ENCODE measurements at regions of chr15 and their contacts with region 1.

Region 1: GRCh38 chr15:63277038-63277892 is at the start of gene APH1B:
- DNase-seq: peak; percentile 51 to 87 (median 76)
- ATAC-seq: peak; percentile 88
- H3K4me3 ChIP-seq: peak within 1 kb of the TSS; percentile 79 to 80
- H3K4me3 Mint-ChIP-seq: peak within 1 kb of the TSS; percentile 89
- H3K27ac ChIP-seq: peak within 1 kb of the TSS; percentile 62 to 74
- H3K27ac Mint-ChIP-seq: peak within 1 kb of the TSS; percentile 91
- H3K4me1 ChIP-seq: peaks cover 19% of the 10 kb centered on the region
- H3K4me1 Mint-ChIP-seq: peaks cover 36% of the 10 kb centered on the region
- H3K27me3 ChIP-seq: no peaks in the 10 kb centered on the region
- H3K27me3 Mint-ChIP-seq: no peaks in the 10 kb centered on the region
- CTCF ChIP-seq: no peak
- total RNA-seq, gene APH1B: 10.8 to 13.6 TPM

Region 2: DNA sequence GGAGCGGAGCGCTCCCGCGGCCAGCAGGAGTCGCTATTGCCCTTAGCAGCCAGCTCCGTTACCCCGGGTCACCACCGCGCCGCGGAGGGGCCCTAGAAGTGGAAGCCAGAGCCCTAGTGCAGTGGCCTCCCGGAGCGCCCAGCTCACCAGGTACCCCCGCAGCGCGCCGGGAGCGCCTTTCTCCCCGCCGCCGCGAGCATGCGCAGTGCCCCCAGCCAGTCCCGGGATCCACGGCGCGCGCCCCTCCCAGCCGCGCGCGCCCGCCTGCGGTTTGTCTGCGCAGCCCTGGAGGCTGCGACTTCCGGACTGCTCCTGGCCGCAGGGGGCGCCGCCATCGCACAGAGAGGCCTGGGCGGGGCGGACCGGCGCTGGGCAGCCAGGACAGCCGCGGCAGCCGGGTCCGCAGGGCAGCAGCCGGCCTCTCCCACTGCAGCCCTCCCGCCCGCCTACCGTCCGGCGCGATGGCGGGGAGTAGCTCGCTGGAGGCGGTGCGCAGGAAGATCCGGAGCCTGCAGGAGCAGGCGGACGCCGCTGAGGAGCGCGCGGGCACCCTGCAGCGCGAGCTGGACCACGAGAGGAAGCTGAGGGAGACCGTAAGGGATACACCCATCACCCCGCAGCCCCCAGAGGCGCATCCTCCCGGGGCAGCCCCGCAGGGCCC is 229.0 kb before region 1 on chr15:
- CTCF ChIA-PET with region 1: interaction called, 3 read pairs
- POLR2A ChIA-PET with region 1: no interaction called
- intact Hi-C with region 1: loop called (anchors 2 to 5 kb)
- DNase-seq: peak; percentile 65 to 92 (median 85)
- ATAC-seq: peak; percentile 77
- H3K4me3 ChIP-seq: peak overlapping the region; percentile 62 to 72
- H3K4me3 Mint-ChIP-seq: peak overlapping the region; percentile 88
- H3K27ac ChIP-seq: peak overlapping the region in 1 of 2 experiments; percentile 47
- H3K27ac Mint-ChIP-seq: peak overlapping the region; percentile 74
- H3K4me1 ChIP-seq: peaks cover 21% of the 10 kb centered on the region
- H3K4me1 Mint-ChIP-seq: peaks cover 21% of the 10 kb centered on the region
- H3K27me3 ChIP-seq: peaks cover 14 to 25% of the 10 kb centered on the region in 2 experiments
- H3K27me3 Mint-ChIP-seq: peaks cover 32% of the 10 kb centered on the region
- CTCF ChIP-seq: peak; percentile 80

Region 3: DNA sequence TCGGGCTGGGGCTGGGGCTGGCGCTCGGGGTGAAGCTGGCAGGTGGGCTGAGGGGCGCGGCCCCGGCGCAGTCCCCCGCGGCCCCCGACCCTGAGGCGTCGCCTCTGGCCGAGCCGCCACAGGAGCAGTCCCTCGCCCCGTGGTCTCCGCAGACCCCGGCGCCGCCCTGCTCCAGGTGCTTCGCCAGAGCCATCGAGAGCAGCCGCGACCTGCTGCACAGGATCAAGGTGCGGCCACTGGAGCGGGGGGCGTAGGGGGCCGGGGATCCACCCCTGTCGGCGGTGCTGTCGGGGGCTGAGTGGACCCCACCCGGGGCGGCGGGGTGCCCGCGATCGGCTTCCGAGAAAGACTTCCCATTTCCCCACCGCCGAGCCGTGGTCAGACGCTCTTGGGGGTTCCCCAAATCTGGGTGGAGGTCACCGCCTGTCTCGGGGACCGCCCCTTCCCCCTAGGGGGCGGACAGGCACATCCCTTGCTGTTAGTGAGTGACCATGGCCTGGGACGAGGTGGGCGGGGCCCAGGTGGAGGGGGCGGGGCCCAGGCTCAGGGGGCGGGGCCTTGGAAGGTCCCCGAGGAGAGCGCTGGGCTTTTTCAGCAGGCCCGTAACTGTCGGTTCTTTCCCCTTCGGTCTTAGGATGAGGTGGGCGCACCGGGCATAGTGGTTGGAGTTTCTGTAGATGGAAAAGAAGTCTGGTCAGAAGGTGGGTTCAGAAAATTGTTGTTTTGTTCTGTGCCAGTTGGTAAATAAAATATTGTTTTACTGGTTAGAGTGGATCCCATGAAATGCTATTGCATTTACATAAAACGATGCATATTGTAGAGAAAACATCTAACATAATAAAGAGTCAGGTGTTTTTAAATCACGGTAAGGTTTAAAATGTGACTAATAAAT is 155.0 kb before region 1 on chr15:
- CTCF ChIA-PET with region 1: no interaction called
- POLR2A ChIA-PET with region 1: no interaction called
- intact Hi-C with region 1: loop called (anchors 1 to 2 kb)
- DNase-seq: peak; percentile 19 to 87 (median 69)
- ATAC-seq: peak; percentile 81
- H3K4me3 ChIP-seq: peak overlapping the region; percentile 83 to 87
- H3K4me3 Mint-ChIP-seq: peak overlapping the region; percentile 87
- H3K27ac ChIP-seq: peak overlapping the region; percentile 61 to 66
- H3K27ac Mint-ChIP-seq: peak overlapping the region; percentile 90
- H3K4me1 ChIP-seq: peaks cover 7% of the 10 kb centered on the region
- H3K4me1 Mint-ChIP-seq: peaks cover 17% of the 10 kb centered on the region
- H3K27me3 ChIP-seq: no peaks in the 10 kb centered on the region
- H3K27me3 Mint-ChIP-seq: no peaks in the 10 kb centered on the region
- CTCF ChIP-seq: no peak

Region 4: GRCh38 chr15:63157118-63157843 is 120.0 kb before region 1 on chr15 and contains the start of gene RPS27L:
- CTCF ChIA-PET with region 1: interaction called, 5 read pairs
- POLR2A ChIA-PET with region 1: interaction called, 10 read pairs
- intact Hi-C with region 1: loop called (anchors 1 kb)
- DNase-seq: peak; percentile 65 to 91 (median 88)
- ATAC-seq: peak; percentile 96
- H3K4me3 ChIP-seq: peak within 1 kb of the TSS; percentile 94 to 96
- H3K4me3 Mint-ChIP-seq: peak within 1 kb of the TSS; percentile 100
- H3K27ac ChIP-seq: peak within 1 kb of the TSS; percentile 75 to 78
- H3K27ac Mint-ChIP-seq: peak within 1 kb of the TSS; percentile 97
- H3K4me1 ChIP-seq: peaks cover 18% of the 10 kb centered on the region
- H3K4me1 Mint-ChIP-seq: peaks cover 26% of the 10 kb centered on the region
- H3K27me3 ChIP-seq: no peaks in the 10 kb centered on the region
- H3K27me3 Mint-ChIP-seq: no peaks in the 10 kb centered on the region
- CTCF ChIP-seq: no peak
- total RNA-seq, gene RPS27L: 40.3 to 45.9 TPM

Region 5: GRCh38 chr15:63238796-63239195 is 38.5 kb before region 1 on chr15:
- CTCF ChIA-PET with region 1: no interaction called
- POLR2A ChIA-PET with region 1: no interaction called
- intact Hi-C with region 1: loop called in 1 of 2 experiments (anchors 5 kb)
- DNase-seq: peak in 2 of 9 experiments; percentile 22 to 48
- ATAC-seq: no peak
- H3K4me3 ChIP-seq: no peak overlapping the region
- H3K4me3 Mint-ChIP-seq: no peak overlapping the region
- H3K27ac ChIP-seq: no peak overlapping the region
- H3K27ac Mint-ChIP-seq: no peak overlapping the region
- H3K4me1 ChIP-seq: peaks cover 19% of the 10 kb centered on the region
- H3K4me1 Mint-ChIP-seq: peaks cover 72% of the 10 kb centered on the region
- H3K27me3 ChIP-seq: no peaks in the 10 kb centered on the region
- H3K27me3 Mint-ChIP-seq: no peaks in the 10 kb centered on the region
- CTCF ChIP-seq: no peak

Region 6: GRCh38 chr15:63260791-63261190 is 16.5 kb before region 1 on chr15:
- CTCF ChIA-PET with region 1: interaction called, 3 read pairs
- POLR2A ChIA-PET with region 1: interaction called, 5 read pairs
- intact Hi-C with region 1: loop called in 1 of 2 experiments (anchors 2 kb)
- DNase-seq: no peak
- ATAC-seq: no peak
- H3K4me3 ChIP-seq: no peak overlapping the region
- H3K4me3 Mint-ChIP-seq: no peak overlapping the region
- H3K27ac ChIP-seq: no peak overlapping the region
- H3K27ac Mint-ChIP-seq: no peak overlapping the region
- H3K4me1 ChIP-seq: no peaks in the 10 kb centered on the region
- H3K4me1 Mint-ChIP-seq: no peaks in the 10 kb centered on the region
- H3K27me3 ChIP-seq: no peaks in the 10 kb centered on the region
- H3K27me3 Mint-ChIP-seq: no peaks in the 10 kb centered on the region
- CTCF ChIP-seq: no peak